ENCODE measurements at regions of chr3 and their contacts with region 1.

Region 1: GRCh38 chr3:102057781-102058421 is 208.6 kb downstream of the NFKBIZ start:
- DNase-seq: peak in 7 of 9 donors; percentile 57 to 82 (median 72)
- ATAC-seq: peak; percentile 96
- H3K4me3 ChIP-seq: peak overlapping the region; percentile 5
- H3K4me3 Mint-ChIP-seq: peak overlapping the region; percentile 23 to 74 (median 44)
- H3K27ac ChIP-seq: peak overlapping the region; percentile 44
- H3K27ac Mint-ChIP-seq: peak overlapping the region; percentile 68 to 91 (median 84)
- H3K4me1 ChIP-seq: peaks cover 27 to 30% of the 10 kb centered on the region in 2 donors
- H3K4me1 Mint-ChIP-seq: peaks cover 26 to 56% (median 46%) of the 10 kb centered on the region in 7 donors
- H3K27me3 ChIP-seq: no peaks in the 10 kb centered on the region
- H3K27me3 Mint-ChIP-seq: no peaks in the 10 kb centered on the region

Region 2: GRCh38 chr3:101809178-101810021 is 248.5 kb before region 1 on chr3:
- CTCF ChIA-PET with region 1: interaction called, 3 read pairs
- POLR2A ChIA-PET with region 1: interaction called, 3 read pairs
- intact Hi-C with region 1: loop called in 1 of 2 experiments (anchors 5 kb)
- DNase-seq: peak in 7 of 9 donors; percentile 31 to 67 (median 57)
- ATAC-seq: peak; percentile 88
- H3K4me3 ChIP-seq: no peak overlapping the region
- H3K4me3 Mint-ChIP-seq: peak overlapping the region in 8 of 10 donors; percentile 23 to 66 (median 60)
- H3K27ac ChIP-seq: peak overlapping the region; percentile 34
- H3K27ac Mint-ChIP-seq: peak overlapping the region; percentile 51 to 93 (median 87)
- H3K4me1 ChIP-seq: peaks cover 0 to 27% of the 10 kb centered on the region in 2 donors
- H3K4me1 Mint-ChIP-seq: peaks cover 11 to 62% (median 54%) of the 10 kb centered on the region in 7 donors
- H3K27me3 ChIP-seq: no peaks in the 10 kb centered on the region
- H3K27me3 Mint-ChIP-seq: no peaks in the 10 kb centered on the region

Region 3: GRCh38 chr3:101821503-101821902 is 236.4 kb before region 1 on chr3:
- CTCF ChIA-PET with region 1: no interaction called
- POLR2A ChIA-PET with region 1: no interaction called
- intact Hi-C with region 1: no loop called
- DNase-seq: no peak
- ATAC-seq: no peak
- H3K4me3 ChIP-seq: no peak overlapping the region
- H3K4me3 Mint-ChIP-seq: no peak overlapping the region
- H3K27ac ChIP-seq: no peak overlapping the region
- H3K27ac Mint-ChIP-seq: peak overlapping the region in 2 of 9 donors; percentile 56 to 66
- H3K4me1 ChIP-seq: peaks cover 0 to 8% of the 10 kb centered on the region in 2 donors
- H3K4me1 Mint-ChIP-seq: peaks cover 14 to 48% (median 36%) of the 10 kb centered on the region in 7 donors
- H3K27me3 ChIP-seq: no peaks in the 10 kb centered on the region
- H3K27me3 Mint-ChIP-seq: no peaks in the 10 kb centered on the region

Region 4: DNA sequence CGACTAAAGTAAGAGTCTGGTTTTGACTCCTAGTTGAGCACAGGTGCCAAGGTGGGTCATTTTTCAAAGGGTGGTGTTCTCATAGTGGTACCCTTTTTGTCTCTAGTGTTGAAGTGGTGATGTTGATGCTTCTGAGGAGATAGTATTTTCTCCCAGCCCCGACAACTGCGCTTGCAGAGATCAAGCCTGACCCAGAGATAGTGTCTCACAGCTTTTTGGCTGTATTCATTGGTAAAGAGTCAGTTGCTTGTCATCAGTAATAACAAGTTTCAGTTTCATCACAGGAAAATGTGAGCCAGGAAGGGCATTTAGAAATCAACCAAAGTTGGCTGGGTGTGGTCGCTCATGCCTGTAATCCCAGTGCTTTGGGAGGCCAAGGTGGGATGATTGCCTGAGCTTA is 69.3 kb before region 1 on chr3:
- CTCF ChIA-PET with region 1: no interaction called
- POLR2A ChIA-PET with region 1: no interaction called
- intact Hi-C with region 1: loop called in 1 of 2 experiments (anchors 5 kb)
- DNase-seq: no peak
- ATAC-seq: no peak
- H3K4me3 ChIP-seq: no peak overlapping the region
- H3K4me3 Mint-ChIP-seq: peak overlapping the region in 1 of 10 donors; percentile 15
- H3K27ac ChIP-seq: no peak overlapping the region
- H3K27ac Mint-ChIP-seq: peak overlapping the region in 1 of 9 donors; percentile 62
- H3K4me1 ChIP-seq: peaks cover 0 to 6% of the 10 kb centered on the region in 2 donors
- H3K4me1 Mint-ChIP-seq: peaks cover 4 to 32% (median 16%) of the 10 kb centered on the region in 7 donors
- H3K27me3 ChIP-seq: no peaks in the 10 kb centered on the region
- H3K27me3 Mint-ChIP-seq: peaks cover 0 to 20% (median 0%) of the 10 kb centered on the region in 5 donors

Region 5: GRCh38 chr3:102078854-102079253 is 21.0 kb after region 1 on chr3:
- CTCF ChIA-PET with region 1: interaction called, 7 read pairs
- POLR2A ChIA-PET with region 1: interaction called, 5 read pairs
- intact Hi-C with region 1: loop called in 1 of 2 experiments (anchors 2 kb)
- DNase-seq: peak in 6 of 9 donors; percentile 36 to 64 (median 50)
- ATAC-seq: peak; percentile 72
- H3K4me3 ChIP-seq: peak overlapping the region; percentile 27
- H3K4me3 Mint-ChIP-seq: peak overlapping the region; percentile 47 to 82 (median 70)
- H3K27ac ChIP-seq: peak overlapping the region; percentile 74
- H3K27ac Mint-ChIP-seq: peak overlapping the region; percentile 85 to 99 (median 97)
- H3K4me1 ChIP-seq: peaks cover 0 to 44% of the 10 kb centered on the region in 2 donors
- H3K4me1 Mint-ChIP-seq: peaks cover 16 to 84% (median 72%) of the 10 kb centered on the region in 7 donors
- H3K27me3 ChIP-seq: no peaks in the 10 kb centered on the region
- H3K27me3 Mint-ChIP-seq: peaks cover 0 to 4% (median 0%) of the 10 kb centered on the region in 5 donors

Region 6: DNA sequence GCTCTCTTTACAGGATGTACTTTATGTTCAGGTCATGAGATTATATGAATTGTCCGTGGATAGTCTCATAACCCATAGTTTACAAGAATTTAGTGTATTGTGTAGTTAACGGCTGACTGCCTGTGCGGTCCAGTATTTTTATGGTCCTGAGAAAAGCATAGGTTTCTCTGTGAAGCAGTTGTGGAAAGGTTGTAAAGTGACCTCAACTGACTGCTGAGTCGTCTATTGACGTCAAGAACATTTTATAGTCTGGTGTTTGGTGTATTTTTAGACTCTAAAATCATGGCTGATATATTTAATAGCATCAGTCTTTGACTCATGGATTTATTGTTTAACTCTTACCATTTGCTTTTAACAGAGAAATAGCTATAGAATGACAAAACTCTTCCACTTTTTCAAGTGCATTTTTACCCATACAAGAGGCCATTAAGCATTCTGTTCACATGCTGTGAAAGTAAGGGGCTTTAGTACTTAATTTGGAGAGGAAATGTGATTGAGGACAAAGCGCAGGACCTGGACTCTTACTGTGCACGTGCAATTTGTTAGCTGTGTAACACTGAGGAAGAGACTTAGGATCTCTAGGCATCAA is 32.1 kb after region 1 on chr3:
- CTCF ChIA-PET with region 1: no interaction called
- POLR2A ChIA-PET with region 1: no interaction called
- intact Hi-C with region 1: loop called in 1 of 2 experiments (anchors 5 kb)
- DNase-seq: no peak
- ATAC-seq: no peak
- H3K4me3 ChIP-seq: no peak overlapping the region
- H3K4me3 Mint-ChIP-seq: no peak overlapping the region
- H3K27ac ChIP-seq: no peak overlapping the region
- H3K27ac Mint-ChIP-seq: no peak overlapping the region
- H3K4me1 ChIP-seq: peaks cover 0 to 13% of the 10 kb centered on the region in 2 donors
- H3K4me1 Mint-ChIP-seq: peaks cover 12 to 51% (median 30%) of the 10 kb centered on the region in 7 donors
- H3K27me3 ChIP-seq: no peaks in the 10 kb centered on the region
- H3K27me3 Mint-ChIP-seq: peaks cover 0 to 5% (median 0%) of the 10 kb centered on the region in 5 donors

Region 7: GRCh38 chr3:102827386-102827785 is 769.5 kb after region 1 on chr3:
- CTCF ChIA-PET with region 1: no interaction called
- POLR2A ChIA-PET with region 1: no interaction called
- intact Hi-C with region 1: no loop called
- DNase-seq: no peak
- ATAC-seq: no peak
- H3K4me3 ChIP-seq: no peak overlapping the region
- H3K4me3 Mint-ChIP-seq: no peak overlapping the region
- H3K27ac ChIP-seq: no peak overlapping the region
- H3K27ac Mint-ChIP-seq: no peak overlapping the region
- H3K4me1 ChIP-seq: no peaks in the 10 kb centered on the region
- H3K4me1 Mint-ChIP-seq: no peaks in the 10 kb centered on the region
- H3K27me3 ChIP-seq: no peaks in the 10 kb centered on the region
- H3K27me3 Mint-ChIP-seq: no peaks in the 10 kb centered on the region

Measured in naive thymus-derived CD4-positive, alpha-beta T cell (primary cell).